Activated CD4-positive, alpha-beta memory T cell treated with anti-CD3 and anti-CD28 coated beads, Interleukin-2, amount 10 ng/mL, durations not matched to agents 7 days and 5 days (primary cell): ENCODE measurements at regions of chr4 and their contacts with region 1.

Region 1: GRCh38 chr4:6783053-6783981 is 790 bp downstream of the KIAA0232 start:
- DNase-seq: peak; percentile 92
- H3K4me3 Mint-ChIP-seq: peak overlapping the region; percentile 79
- H3K27ac Mint-ChIP-seq: peak overlapping the region; percentile 79
- H3K4me1 Mint-ChIP-seq: peaks cover 60% of the 10 kb centered on the region
- H3K27me3 Mint-ChIP-seq: peaks cover 2% of the 10 kb centered on the region

Region 2: DNA sequence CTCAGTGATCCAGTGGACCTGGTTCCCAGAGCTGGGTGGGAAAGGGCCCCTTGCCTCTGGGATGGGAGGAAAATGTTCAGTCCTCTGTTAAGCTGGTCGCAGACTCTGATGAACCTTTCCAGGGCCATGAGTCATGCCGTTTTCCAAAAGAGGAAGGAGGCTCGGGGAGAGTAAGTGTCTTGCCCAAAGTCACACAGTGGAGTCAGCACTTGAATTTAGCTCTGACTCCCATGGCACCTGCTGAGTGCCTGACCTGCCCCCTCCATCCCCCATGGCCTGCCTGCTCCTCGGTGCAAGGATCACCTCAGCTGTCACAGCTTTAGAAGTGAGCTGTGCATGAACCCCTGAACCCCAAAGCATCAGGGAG is 14.8 kb before region 1 on chr4:
- CTCF ChIA-PET with region 1: interaction called, 3 read pairs
- POLR2A ChIA-PET with region 1: interaction called, 14 read pairs
- DNase-seq: no peak
- H3K4me3 Mint-ChIP-seq: no peak overlapping the region
- H3K27ac Mint-ChIP-seq: no peak overlapping the region
- H3K4me1 Mint-ChIP-seq: peaks cover 12% of the 10 kb centered on the region
- H3K27me3 Mint-ChIP-seq: peaks cover 17% of the 10 kb centered on the region

Region 3: DNA sequence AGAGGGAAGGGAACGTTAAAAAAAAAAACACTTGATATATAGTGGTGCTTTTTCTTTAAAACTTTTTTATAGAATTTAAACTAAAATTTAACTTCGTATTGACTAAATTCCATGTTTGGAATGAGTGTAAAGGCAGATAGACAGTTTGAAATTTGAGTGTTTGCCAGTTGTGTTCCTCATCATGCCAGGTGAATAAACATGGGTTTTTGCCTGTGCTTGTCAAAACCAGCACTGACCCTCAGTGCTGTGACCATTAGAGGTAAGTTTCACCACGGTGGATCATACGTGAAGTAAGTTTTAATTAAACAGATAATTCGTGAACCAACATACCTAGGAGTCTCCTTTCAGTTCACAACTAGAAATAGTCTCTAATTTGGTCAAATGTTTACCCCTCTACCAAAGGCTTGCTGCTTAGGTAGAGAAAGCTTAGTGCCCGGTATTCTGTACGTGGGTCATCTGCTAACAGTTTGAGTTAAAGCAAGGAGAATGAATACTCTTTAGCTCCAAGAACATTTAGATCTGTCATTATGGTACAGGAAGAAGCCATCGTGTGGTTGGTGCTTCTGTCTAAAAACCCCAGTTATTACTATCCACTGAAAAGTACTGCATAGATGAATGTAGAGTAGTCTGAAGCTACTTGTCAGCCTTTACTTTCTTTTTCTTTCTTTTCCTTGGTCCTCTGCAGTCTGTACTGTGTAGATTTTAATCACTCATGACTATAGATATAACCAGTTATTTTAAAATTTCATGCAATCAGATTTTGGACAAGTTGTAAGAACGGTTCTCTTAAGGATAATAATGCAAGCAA is 31.9 kb after region 1 on chr4:
- CTCF ChIA-PET with region 1: no interaction called
- POLR2A ChIA-PET with region 1: no interaction called
- DNase-seq: no peak
- H3K4me3 Mint-ChIP-seq: no peak overlapping the region
- H3K27ac Mint-ChIP-seq: no peak overlapping the region
- H3K4me1 Mint-ChIP-seq: peaks cover 8% of the 10 kb centered on the region
- H3K27me3 Mint-ChIP-seq: no peaks in the 10 kb centered on the region

Region 4: DNA sequence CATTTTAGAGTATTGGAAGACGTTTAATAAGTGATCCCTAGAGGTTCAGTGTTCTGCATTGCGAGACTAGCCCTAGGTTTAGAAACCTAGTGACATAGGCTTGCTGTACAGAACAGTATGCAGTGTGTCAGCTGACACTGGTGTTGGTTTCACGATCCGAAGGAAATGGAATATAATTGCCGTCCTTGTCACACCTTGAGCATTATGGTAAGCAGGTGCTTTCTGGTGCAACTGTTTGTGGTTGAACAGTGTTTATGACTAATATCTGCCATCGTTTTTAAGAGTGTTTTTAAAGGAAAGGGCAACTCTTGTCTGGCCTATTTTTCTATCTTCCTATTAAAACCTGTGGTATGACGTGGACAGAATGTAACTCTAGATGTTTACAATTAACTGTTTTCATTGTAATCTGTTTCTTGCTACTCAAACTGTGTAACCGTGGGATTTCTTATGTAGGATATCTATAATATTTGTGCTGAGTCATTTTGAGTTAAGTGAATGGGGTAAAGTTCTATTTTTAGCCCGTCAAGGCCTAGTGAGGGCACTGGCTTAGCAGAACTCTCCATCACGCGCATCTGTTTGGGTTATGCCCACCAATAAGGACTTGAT is 72.5 kb after region 1 on chr4:
- CTCF ChIA-PET with region 1: no interaction called
- POLR2A ChIA-PET with region 1: no interaction called
- DNase-seq: peak; percentile 57
- H3K4me3 Mint-ChIP-seq: no peak overlapping the region
- H3K27ac Mint-ChIP-seq: peak overlapping the region; percentile 81
- H3K4me1 Mint-ChIP-seq: peaks cover 33% of the 10 kb centered on the region
- H3K27me3 Mint-ChIP-seq: no peaks in the 10 kb centered on the region